ENCODE measurements at regions of chr11 and their contacts with region 1.

Region 1: DNA sequence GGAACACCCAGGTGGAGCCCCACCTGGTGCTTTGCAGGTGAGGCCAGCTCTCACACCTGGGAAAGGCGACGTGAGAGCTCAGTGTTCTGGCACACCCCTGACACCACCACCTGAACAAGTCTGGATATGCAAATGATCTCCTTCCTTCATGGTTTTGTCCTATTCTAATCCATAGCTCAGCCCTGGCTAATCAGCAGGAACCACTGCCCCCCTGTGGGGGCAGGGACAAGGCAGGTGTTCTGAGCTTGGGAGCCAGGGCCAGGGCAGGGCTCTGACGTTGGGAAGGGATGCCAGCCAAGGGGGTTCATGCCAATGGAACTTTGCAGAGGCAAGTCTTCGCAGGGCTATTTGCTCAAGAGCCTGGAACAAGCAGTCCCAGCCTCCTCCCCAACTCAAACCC is 144.2 kb downstream of the TRIM29 start:
- DNase-seq: peak in 1 of 2 experiments; percentile 69
- H3K4me3 ChIP-seq: no peak overlapping the region
- H3K4me3 Mint-ChIP-seq: no peak overlapping the region
- H3K27ac Mint-ChIP-seq: no peak overlapping the region
- H3K4me1 ChIP-seq: 0 out of 2 replicates have a peak, but pooled peaks cover 8% of the 10 kb centered on the region
- H3K4me1 Mint-ChIP-seq: no peaks in the 10 kb centered on the region
- H3K27me3 ChIP-seq: no peaks in the 10 kb centered on the region
- H3K27me3 Mint-ChIP-seq: no peaks in the 10 kb centered on the region
- CTCF ChIP-seq: peak; percentile 33 to 82

Region 2: DNA sequence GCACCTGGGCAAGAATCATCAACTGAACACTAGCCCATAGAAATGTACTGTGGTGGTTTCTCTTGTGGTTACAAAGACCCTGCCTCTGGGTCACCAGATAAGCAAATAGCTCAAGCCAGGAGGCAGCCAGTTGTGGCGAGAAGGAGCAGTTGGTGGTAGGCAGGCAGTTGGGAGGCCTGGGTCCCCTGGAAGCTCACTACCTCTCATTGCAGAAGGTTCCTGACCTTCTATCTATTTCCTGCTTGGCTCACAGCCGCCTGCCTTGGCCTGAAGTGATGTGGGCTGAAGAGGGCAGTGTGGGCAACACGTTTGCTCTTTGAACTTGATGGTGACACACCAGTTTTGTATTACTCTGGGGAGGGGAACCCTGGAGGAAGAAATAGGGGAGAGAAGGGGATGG is 299.4 kb before region 1 on chr11:
- CTCF ChIA-PET with region 1: no interaction called
- POLR2A ChIA-PET with region 1: no interaction called
- intact Hi-C with region 1: loop called (anchors 1 kb)
- DNase-seq: peak in 1 of 2 experiments; percentile 62
- H3K4me3 ChIP-seq: no peak overlapping the region
- H3K4me3 Mint-ChIP-seq: no peak overlapping the region
- H3K27ac Mint-ChIP-seq: peak overlapping the region; percentile 22
- H3K4me1 ChIP-seq: peaks cover 13% of the 10 kb centered on the region; the same call in 1 of the 2 replicates
- H3K4me1 Mint-ChIP-seq: peaks cover 21% of the 10 kb centered on the region
- H3K27me3 ChIP-seq: no peaks in the 10 kb centered on the region
- H3K27me3 Mint-ChIP-seq: no peaks in the 10 kb centered on the region
- CTCF ChIP-seq: peak; percentile 38 to 73

Region 3: GRCh38 chr11:119878990-119879389 is 114.7 kb before region 1 on chr11:
- CTCF ChIA-PET with region 1: no interaction called
- POLR2A ChIA-PET with region 1: no interaction called
- intact Hi-C with region 1: no loop called
- DNase-seq: no peak
- H3K4me3 ChIP-seq: no peak overlapping the region
- H3K4me3 Mint-ChIP-seq: no peak overlapping the region
- H3K27ac Mint-ChIP-seq: no peak overlapping the region
- H3K4me1 ChIP-seq: peaks cover 12% of the 10 kb centered on the region; the same call in 1 of the 2 replicates
- H3K4me1 Mint-ChIP-seq: peaks cover 13% of the 10 kb centered on the region
- H3K27me3 ChIP-seq: no peaks in the 10 kb centered on the region
- H3K27me3 Mint-ChIP-seq: no peaks in the 10 kb centered on the region
- CTCF ChIP-seq: no peak

Measured in Caco-2 (cell line).